ENCODE measurements at regions of chr18 and their contacts with region 1.

Region 1: GRCh38 chr18:31722369-31722957 is 38.1 kb upstream of the B4GALT6 start:
- DNase-seq: peak; percentile 88
- ATAC-seq: peak; percentile 98
- H3K4me3 Mint-ChIP-seq: no peak overlapping the region
- H3K27ac Mint-ChIP-seq: no peak overlapping the region
- H3K4me1 Mint-ChIP-seq: peaks cover 6% of the 10 kb centered on the region
- H3K27me3 Mint-ChIP-seq: peaks cover 19% of the 10 kb centered on the region

Region 2: GRCh38 chr18:30971338-30971956 is 751.0 kb before region 1 on chr18:
- CTCF ChIA-PET with region 1: no interaction called
- POLR2A ChIA-PET with region 1: no interaction called
- intact Hi-C with region 1: loop called in 1 of 2 experiments (anchors 2 kb)
- DNase-seq: no peak
- ATAC-seq: no peak
- H3K4me3 Mint-ChIP-seq: no peak overlapping the region
- H3K27ac Mint-ChIP-seq: no peak overlapping the region
- H3K4me1 Mint-ChIP-seq: no peaks in the 10 kb centered on the region
- H3K27me3 Mint-ChIP-seq: no peaks in the 10 kb centered on the region

Region 3: GRCh38 chr18:31424383-31424988 is 298.0 kb before region 1 on chr18:
- CTCF ChIA-PET with region 1: interaction called, 4 read pairs
- POLR2A ChIA-PET with region 1: no interaction called
- intact Hi-C with region 1: loop called in 1 of 2 experiments (anchors 5 kb)
- DNase-seq: peak; percentile 51
- ATAC-seq: no peak
- H3K4me3 Mint-ChIP-seq: no peak overlapping the region
- H3K27ac Mint-ChIP-seq: no peak overlapping the region
- H3K4me1 Mint-ChIP-seq: no peaks in the 10 kb centered on the region
- H3K27me3 Mint-ChIP-seq: no peaks in the 10 kb centered on the region

Region 4: GRCh38 chr18:31555971-31556747 is 166.3 kb before region 1 on chr18:
- CTCF ChIA-PET with region 1: interaction called, 80 read pairs
- POLR2A ChIA-PET with region 1: no interaction called
- intact Hi-C with region 1: loop called (anchors 1 kb)
- DNase-seq: peak; percentile 56
- ATAC-seq: peak; percentile 61
- H3K4me3 Mint-ChIP-seq: no peak overlapping the region
- H3K27ac Mint-ChIP-seq: no peak overlapping the region
- H3K4me1 Mint-ChIP-seq: peaks cover 2% of the 10 kb centered on the region
- H3K27me3 Mint-ChIP-seq: peaks cover 5% of the 10 kb centered on the region

Region 5: GRCh38 chr18:31680831-31681568 is 41.5 kb before region 1 on chr18:
- CTCF ChIA-PET with region 1: no interaction called
- POLR2A ChIA-PET with region 1: no interaction called
- intact Hi-C with region 1: no loop called
- DNase-seq: no peak
- ATAC-seq: no peak
- H3K4me3 Mint-ChIP-seq: no peak overlapping the region
- H3K27ac Mint-ChIP-seq: no peak overlapping the region
- H3K4me1 Mint-ChIP-seq: peaks cover 18% of the 10 kb centered on the region
- H3K27me3 Mint-ChIP-seq: peaks cover 27% of the 10 kb centered on the region

Region 6: GRCh38 chr18:31741097-31741735 is 18.8 kb after region 1 on chr18:
- CTCF ChIA-PET with region 1: interaction called, 10 read pairs
- POLR2A ChIA-PET with region 1: no interaction called
- intact Hi-C with region 1: no loop called
- DNase-seq: peak; percentile 73
- ATAC-seq: no peak
- H3K4me3 Mint-ChIP-seq: no peak overlapping the region
- H3K27ac Mint-ChIP-seq: no peak overlapping the region
- H3K4me1 Mint-ChIP-seq: no peaks in the 10 kb centered on the region
- H3K27me3 Mint-ChIP-seq: no peaks in the 10 kb centered on the region